Activated T-helper 1 cell treated with anti-CD3 and anti-CD28 coated beads, Interleukin-12 subunit alpha, Interleukin-12 subunit beta, Interleukin-2, Interleukin-4 antibody, amounts not matched to agents 30 ng/mL and 10 ng/mL and 1 ng/mL, durations not matched to agents 14 hours and 24 hours and 36 hours (primary cell): ENCODE measurements at regions of chr12 and their contacts with region 1.

Region 1: DNA sequence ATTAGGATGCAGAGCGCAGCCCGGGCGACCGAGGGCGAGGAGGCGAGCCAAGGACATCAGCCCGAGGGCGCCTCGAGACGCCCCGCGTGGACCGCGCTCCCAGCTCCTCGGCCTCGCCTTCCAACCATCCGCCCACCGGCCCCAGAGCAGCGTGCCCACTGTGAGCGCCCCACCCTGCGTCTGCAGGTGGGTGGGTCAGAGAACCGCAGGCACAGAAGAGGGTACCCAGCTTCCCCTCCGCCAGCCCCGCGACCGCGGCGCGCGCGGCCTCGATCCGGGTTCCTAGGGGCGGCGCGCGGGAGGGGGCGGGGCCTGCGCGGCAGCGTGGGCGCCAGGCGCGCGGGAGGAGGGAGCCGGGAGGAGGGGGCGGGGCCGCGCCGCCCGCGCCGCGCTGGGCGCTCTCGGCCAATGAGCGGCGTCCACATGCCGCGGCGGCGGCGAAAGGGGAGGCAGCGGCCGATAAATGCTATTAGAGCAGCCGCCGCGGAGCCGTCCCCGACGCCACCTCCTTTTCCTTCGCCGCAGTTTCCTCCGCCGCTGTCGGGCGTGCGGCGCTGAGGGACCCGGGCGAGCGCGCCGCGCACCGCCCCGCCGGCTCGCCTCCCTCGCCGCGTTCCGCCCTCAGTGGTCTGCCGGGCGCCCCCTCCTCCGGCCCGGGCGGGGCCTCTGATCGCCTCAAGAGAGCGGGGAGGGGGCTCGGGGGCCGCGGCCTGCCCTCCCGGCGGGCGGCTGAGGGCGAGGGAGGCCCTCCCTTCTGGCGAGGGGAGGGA is at the start of gene ATP2A2:
- DNase-seq: peak; percentile 89
- H3K4me3 Mint-ChIP-seq: peak within 1 kb of the TSS; percentile 90
- H3K27ac Mint-ChIP-seq: peak within 1 kb of the TSS; percentile 85
- H3K4me1 Mint-ChIP-seq: peaks cover 48% of the 10 kb centered on the region
- H3K27me3 Mint-ChIP-seq: peaks cover 3% of the 10 kb centered on the region
- total RNA-seq, gene ATP2A2: 208 and 211 TPM in 2 replicates

Region 2: GRCh38 chr12:109154451-109155438 is 1126.2 kb before region 1 on chr12:
- intact Hi-C with region 1: loop called (anchors 5 kb)
- DNase-seq: peak; percentile 71
- H3K4me3 Mint-ChIP-seq: peak overlapping the region; percentile 85
- H3K27ac Mint-ChIP-seq: peak overlapping the region; percentile 63
- H3K4me1 Mint-ChIP-seq: peaks cover 17% of the 10 kb centered on the region
- H3K27me3 Mint-ChIP-seq: peaks cover 15% of the 10 kb centered on the region

Region 3: DNA sequence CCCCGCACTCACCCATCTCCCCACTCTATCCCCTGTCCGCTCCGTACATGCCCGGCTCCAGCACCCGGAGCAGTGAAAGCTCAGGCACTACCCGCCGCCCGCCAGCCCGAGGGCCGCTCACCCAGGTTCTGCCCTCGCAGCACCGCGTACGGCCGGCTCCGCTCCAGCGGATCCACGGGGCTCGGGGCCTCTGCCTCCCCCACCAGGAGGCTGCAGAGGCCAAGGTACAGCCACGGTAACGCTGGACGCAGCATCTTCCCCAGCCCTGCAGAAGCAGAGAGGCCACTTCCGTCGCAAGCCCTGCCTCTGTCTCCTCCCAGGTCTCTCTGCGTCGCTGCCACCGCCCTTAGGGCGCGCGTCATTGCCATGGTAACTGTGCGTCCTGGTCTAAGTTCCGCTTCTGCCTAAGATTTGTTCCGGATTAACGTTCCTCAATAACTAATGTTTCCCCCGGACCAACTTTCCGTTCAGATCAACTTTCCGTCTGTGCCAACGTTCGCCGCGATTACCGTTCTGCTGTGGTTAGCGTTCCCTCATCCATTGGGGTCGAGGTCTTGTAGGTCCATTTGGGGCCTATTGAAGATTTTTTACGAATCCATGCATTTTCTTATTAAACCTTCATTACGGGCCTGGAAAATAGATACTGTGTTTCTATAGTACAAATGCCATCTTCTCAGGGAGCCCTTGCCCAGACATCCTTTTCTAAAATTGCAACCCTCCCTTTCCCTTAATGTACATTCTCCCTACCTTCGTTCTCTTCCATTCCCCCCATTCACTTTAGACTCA is 232.5 kb before region 1 on chr12 and contains the start of gene C12orf76:
- intact Hi-C with region 1: loop called (anchors 5 kb)
- DNase-seq: peak; percentile 89
- H3K4me3 Mint-ChIP-seq: peak within 1 kb of the TSS; percentile 84
- H3K27ac Mint-ChIP-seq: peak within 1 kb of the TSS; percentile 91
- H3K4me1 Mint-ChIP-seq: peaks cover 34% of the 10 kb centered on the region
- H3K27me3 Mint-ChIP-seq: no peaks in the 10 kb centered on the region
- total RNA-seq, gene C12orf76: 20.3 and 20.8 TPM in 2 replicates

Region 4: GRCh38 chr12:110124184-110124995 is 156.6 kb before region 1 on chr12 and contains the start of gene IFT81:
- intact Hi-C with region 1: loop called (anchors 1 kb)
- DNase-seq: peak; percentile 93
- H3K4me3 Mint-ChIP-seq: peak within 1 kb of the TSS; percentile 88
- H3K27ac Mint-ChIP-seq: peak within 1 kb of the TSS; percentile 83
- H3K4me1 Mint-ChIP-seq: no peaks in the 10 kb centered on the region
- H3K27me3 Mint-ChIP-seq: peaks cover 29% of the 10 kb centered on the region
- total RNA-seq, gene IFT81: 0.91 and 1.2 TPM in 2 replicates

Region 5: GRCh38 chr12:110304061-110304551 is 23.1 kb after region 1 on chr12:
- intact Hi-C with region 1: no loop called
- DNase-seq: no peak
- H3K4me3 Mint-ChIP-seq: no peak overlapping the region
- H3K27ac Mint-ChIP-seq: peak overlapping the region; percentile 0
- H3K4me1 Mint-ChIP-seq: peaks cover 51% of the 10 kb centered on the region
- H3K27me3 Mint-ChIP-seq: no peaks in the 10 kb centered on the region

Region 6: GRCh38 chr12:110403146-110403975 is 122.4 kb after region 1 on chr12 and contains the start of gene ANAPC7:
- intact Hi-C with region 1: loop called (anchors 2 kb)
- DNase-seq: peak; percentile 81
- H3K4me3 Mint-ChIP-seq: peak within 1 kb of the TSS; percentile 100
- H3K27ac Mint-ChIP-seq: peak within 1 kb of the TSS; percentile 97
- H3K4me1 Mint-ChIP-seq: peaks cover 25% of the 10 kb centered on the region
- H3K27me3 Mint-ChIP-seq: no peaks in the 10 kb centered on the region
- total RNA-seq, gene ANAPC7: 72.0 and 72.6 TPM in 2 replicates

Region 7: GRCh38 chr12:110501752-110502738 is 221.1 kb after region 1 on chr12 and contains the starts of genes RAD9B and VPS29:
- intact Hi-C with region 1: loop called (anchors 2 kb)
- DNase-seq: peak; percentile 99
- H3K4me3 Mint-ChIP-seq: peak within 1 kb of the TSS; percentile 90
- H3K27ac Mint-ChIP-seq: peak within 1 kb of the TSS; percentile 90
- H3K4me1 Mint-ChIP-seq: peaks cover 29% of the 10 kb centered on the region
- H3K27me3 Mint-ChIP-seq: no peaks in the 10 kb centered on the region
- total RNA-seq, gene RAD9B: 0.88 and 1.4 TPM in 2 replicates
- total RNA-seq, gene VPS29: 109 and 111 TPM in 2 replicates